A549 (cell line): ENCODE measurements at regions of chr1 and their contacts with region 1.

Region 1: DNA sequence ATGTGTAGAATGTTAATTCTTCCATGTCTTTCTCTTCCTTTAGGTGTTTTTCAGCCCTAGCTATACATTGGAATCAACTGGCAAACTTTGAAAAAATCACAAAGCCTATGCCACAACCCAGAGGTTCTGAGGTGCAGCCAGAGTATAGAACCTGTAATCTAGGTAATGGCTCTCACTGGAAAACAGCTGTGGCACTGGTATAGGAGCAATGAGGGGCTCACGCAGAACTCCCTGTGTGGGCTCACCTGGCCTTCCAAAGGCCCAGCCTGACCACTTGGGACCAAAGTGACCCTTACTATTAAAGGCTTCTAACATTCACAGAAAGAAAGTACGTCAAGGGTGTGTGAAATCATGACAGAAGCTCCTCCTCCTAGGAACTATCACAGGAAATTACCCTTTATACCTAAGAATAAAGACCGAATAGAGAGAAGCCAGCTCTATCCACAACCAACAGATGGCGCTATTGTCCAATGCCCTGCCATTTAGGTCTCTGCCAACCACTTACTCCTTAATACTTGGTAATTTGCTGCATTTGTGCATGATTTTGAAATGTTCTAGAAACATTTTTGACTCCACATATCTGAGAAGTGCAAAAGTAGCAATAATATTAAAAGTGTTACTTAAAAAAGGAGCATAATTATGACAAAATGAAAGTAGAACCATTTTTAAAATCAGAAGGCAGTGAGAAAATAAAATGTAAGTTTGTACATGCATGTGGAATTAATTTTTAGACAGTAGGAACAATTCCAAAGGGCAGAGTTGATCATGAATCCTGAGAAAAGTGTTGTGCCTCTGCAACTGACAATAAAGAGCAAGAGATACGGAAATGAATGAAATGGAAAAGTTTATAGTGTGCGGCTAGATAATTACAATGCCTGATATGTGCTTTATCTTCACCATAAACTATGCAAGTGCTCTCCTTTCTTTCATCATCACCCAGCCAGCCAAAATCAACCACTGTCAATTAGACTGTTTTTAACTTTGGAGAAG is 93.1 kb upstream of the HAO2 start:
- DNase-seq: peak; percentile 13 to 55
- ATAC-seq: peak; percentile 62 to 83; a peak in 5 of 6 replicates
- H3K4me3 ChIP-seq: no peak overlapping the region
- H3K27ac ChIP-seq: no peak overlapping the region
- H3K4me1 ChIP-seq: peaks cover 17% of the 10 kb centered on the region
- CTCF ChIP-seq: peak; percentile 72
- EP300 ChIP-seq: no peak
- POLR2A ChIP-seq: no peak
- RAD21 ChIP-seq: peak; percentile 68 to 72

Region 2: DNA sequence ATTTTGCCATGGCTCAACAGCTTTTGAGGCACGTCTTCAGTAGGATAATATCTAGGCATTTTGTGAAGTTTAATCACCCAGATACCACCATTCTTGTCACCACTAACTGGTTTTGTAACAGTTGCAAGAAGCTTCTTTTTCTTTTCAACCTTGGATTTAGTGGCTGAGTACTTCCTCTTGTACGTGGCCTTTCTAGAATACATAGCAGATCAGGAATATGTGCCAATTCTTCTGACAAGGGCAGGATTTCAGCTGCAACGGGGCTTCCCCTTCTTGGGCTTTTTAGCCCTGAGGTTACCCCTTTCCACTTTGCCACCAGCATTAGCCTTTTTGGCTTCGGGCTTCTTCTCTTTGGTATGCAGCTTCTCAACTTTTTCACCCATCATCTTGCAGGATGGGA is 55.7 kb before region 1 on chr1:
- CTCF ChIA-PET with region 1: no interaction called
- POLR2A ChIA-PET with region 1: no interaction called
- DNase-seq: no peak
- ATAC-seq: no peak
- H3K4me3 ChIP-seq: no peak overlapping the region
- H3K27ac ChIP-seq: no peak overlapping the region
- H3K4me1 ChIP-seq: no peaks in the 10 kb centered on the region
- CTCF ChIP-seq: no peak
- EP300 ChIP-seq: no peak
- POLR2A ChIP-seq: no peak
- RAD21 ChIP-seq: no peak

Region 3: DNA sequence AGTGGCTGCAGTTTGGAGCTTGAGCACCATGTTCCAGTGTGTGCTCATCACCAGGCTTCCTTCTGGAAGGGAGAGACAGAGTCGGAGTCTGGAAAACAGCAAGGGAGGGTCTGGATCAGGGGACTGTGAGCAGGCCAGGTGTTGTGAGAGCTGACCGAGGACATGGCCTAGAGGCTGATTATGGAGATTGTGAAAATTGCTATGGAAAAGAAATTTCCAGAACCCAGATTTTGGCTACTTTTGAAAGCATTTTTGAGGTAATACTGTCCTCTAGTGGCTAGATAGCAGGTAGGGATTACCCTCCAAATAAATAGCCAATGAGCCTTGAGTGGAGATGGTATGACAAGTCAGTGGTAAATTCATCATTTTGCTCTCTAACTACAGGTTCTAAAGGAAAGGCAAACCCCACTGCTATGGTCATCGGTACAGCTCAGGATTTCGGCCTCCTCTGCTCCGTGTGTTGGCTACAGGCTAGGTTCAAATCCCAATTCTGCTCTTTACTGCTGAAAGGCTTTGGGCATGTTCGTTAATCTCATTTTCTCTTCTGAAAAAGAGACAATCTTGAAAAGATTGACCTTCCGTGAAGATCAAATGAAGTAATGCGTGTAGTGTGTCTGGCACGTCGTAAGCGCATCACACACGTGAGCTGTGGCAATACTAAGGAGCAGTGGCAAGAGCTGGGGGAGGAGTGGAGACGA is 92.1 kb after region 1 on chr1:
- CTCF ChIA-PET with region 1: interaction called, 79 read pairs
- POLR2A ChIA-PET with region 1: no interaction called
- DNase-seq: peak; percentile 30 to 32
- ATAC-seq: peak; percentile 71 to 78; a peak in 4 of 6 replicates
- H3K4me3 ChIP-seq: no peak overlapping the region
- H3K27ac ChIP-seq: no peak overlapping the region
- H3K4me1 ChIP-seq: peaks cover under 1% of the 10 kb centered on the region; the same call in 2 of the 3 replicates
- CTCF ChIP-seq: peak; percentile 74
- EP300 ChIP-seq: no peak
- POLR2A ChIP-seq: no peak
- RAD21 ChIP-seq: peak; percentile 77 to 85

Region 4: GRCh38 chr1:119372490-119373086 is 97.1 kb after region 1 on chr1:
- CTCF ChIA-PET with region 1: interaction called, 79 read pairs
- POLR2A ChIA-PET with region 1: no interaction called
- DNase-seq: peak; percentile 46 to 51
- ATAC-seq: peak; percentile 47 to 78; a peak in 3 of 6 replicates
- H3K4me3 ChIP-seq: no peak overlapping the region
- H3K27ac ChIP-seq: peak overlapping the region; percentile 40 to 87; a peak in 4 of 6 replicates
- H3K4me1 ChIP-seq: peaks cover 23% of the 10 kb centered on the region
- CTCF ChIP-seq: peak; percentile 31; the same call in 2 of the 3 replicates
- EP300 ChIP-seq: no peak
- POLR2A ChIP-seq: no peak
- RAD21 ChIP-seq: peak; percentile 49 to 54; a peak in 4 of 5 replicates